Natural killer cell (primary cell): ENCODE measurements at regions of chr21 and their contacts with region 1.

Region 1: DNA sequence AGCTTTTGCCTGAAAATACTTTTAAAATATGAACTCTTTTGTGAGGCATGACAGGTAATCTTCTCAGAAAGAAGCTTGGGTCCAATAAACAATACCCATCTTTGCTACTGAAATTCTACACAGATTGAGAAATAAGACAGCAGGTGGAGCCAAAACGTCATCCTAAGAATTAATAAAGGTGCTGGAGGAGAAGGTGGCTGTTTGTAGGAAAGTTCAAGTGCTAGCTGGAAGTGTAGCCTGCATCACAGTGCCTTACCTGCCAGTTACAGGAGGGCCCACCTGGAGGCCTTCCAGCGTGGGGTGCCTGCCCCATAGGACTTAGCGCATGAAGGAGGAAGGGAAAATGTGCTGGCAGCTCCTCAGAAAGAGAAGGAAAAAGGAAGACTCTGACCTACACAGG is 93.7 kb downstream of the TTC3 start:
- DNase-seq: peak in 1 of 2 donors; percentile 44
- ATAC-seq: no peak
- H3K4me3 ChIP-seq: no peak overlapping the region
- H3K4me3 Mint-ChIP-seq: no peak overlapping the region
- H3K27ac ChIP-seq: no peak overlapping the region
- H3K27ac Mint-ChIP-seq: peak overlapping the region in 1 of 2 donors; percentile 27
- H3K4me1 ChIP-seq: no peaks in the 10 kb centered on the region
- H3K4me1 Mint-ChIP-seq: peaks cover 5% of the 10 kb centered on the region in 2 donors
- H3K27me3 ChIP-seq: no peaks in the 10 kb centered on the region
- H3K27me3 Mint-ChIP-seq: no peaks in the 10 kb centered on the region
- CTCF ChIP-seq: peak; percentile 36

Region 2: GRCh38 chr21:37348664-37349063 is 181.9 kb after region 1 on chr21:
- intact Hi-C with region 1: no loop called
- DNase-seq: no peak
- ATAC-seq: no peak
- H3K4me3 ChIP-seq: no peak overlapping the region
- H3K4me3 Mint-ChIP-seq: no peak overlapping the region
- H3K27ac ChIP-seq: no peak overlapping the region
- H3K27ac Mint-ChIP-seq: no peak overlapping the region
- H3K4me1 ChIP-seq: no peaks in the 10 kb centered on the region
- H3K4me1 Mint-ChIP-seq: no peaks in the 10 kb centered on the region
- H3K27me3 ChIP-seq: no peaks in the 10 kb centered on the region
- H3K27me3 Mint-ChIP-seq: peaks cover 11 to 21% of the 10 kb centered on the region in 2 donors
- CTCF ChIP-seq: no peak

Region 3: GRCh38 chr21:37582590-37582989 is 415.9 kb after region 1 on chr21:
- intact Hi-C with region 1: loop called (anchors 2 kb)
- DNase-seq: peak in 1 of 2 donors; percentile 32
- ATAC-seq: peak in 2 of 3 donors; percentile 63 to 64
- H3K4me3 ChIP-seq: no peak overlapping the region
- H3K4me3 Mint-ChIP-seq: no peak overlapping the region
- H3K27ac ChIP-seq: no peak overlapping the region
- H3K27ac Mint-ChIP-seq: no peak overlapping the region
- H3K4me1 ChIP-seq: no peaks in the 10 kb centered on the region
- H3K4me1 Mint-ChIP-seq: no peaks in the 10 kb centered on the region
- H3K27me3 ChIP-seq: no peaks in the 10 kb centered on the region
- H3K27me3 Mint-ChIP-seq: peaks cover 8 to 24% of the 10 kb centered on the region in 2 donors
- CTCF ChIP-seq: peak; percentile 31